ENCODE measurements at regions of chr18 and their contacts with region 1.

Region 1: GRCh38 chr18:58180738-58181353 is 136.8 kb downstream of the NEDD4L start:
- DNase-seq: peak; percentile 69
- H3K4me3 Mint-ChIP-seq: no peak overlapping the region
- H3K27ac Mint-ChIP-seq: no peak overlapping the region
- H3K4me1 Mint-ChIP-seq: peaks cover 15% of the 10 kb centered on the region
- H3K27me3 Mint-ChIP-seq: no peaks in the 10 kb centered on the region
- CTCF ChIP-seq: peak; percentile 79

Region 2: DNA sequence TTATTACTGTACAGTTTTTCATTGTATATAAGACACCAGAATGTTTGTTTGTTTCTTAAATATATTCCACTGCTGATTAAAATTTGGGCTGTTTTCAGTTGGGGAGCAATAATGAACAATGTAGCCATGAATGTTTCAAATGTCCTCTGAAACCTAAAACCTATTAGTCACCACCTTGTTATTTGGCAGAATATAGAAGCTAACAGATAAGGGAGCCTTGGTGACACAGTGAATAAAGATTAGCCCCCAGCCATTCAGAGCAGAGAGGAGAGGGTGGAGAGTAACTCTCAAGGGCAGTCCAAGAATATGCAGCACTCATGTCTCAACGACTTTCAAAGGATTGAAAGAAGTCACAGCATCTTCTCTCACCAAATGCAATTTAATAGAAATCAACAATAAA is 334.6 kb before region 1 on chr18:
- CTCF ChIA-PET with region 1: no interaction called
- POLR2A ChIA-PET with region 1: no interaction called
- intact Hi-C with region 1: no loop called
- DNase-seq: peak; percentile 16
- H3K4me3 Mint-ChIP-seq: no peak overlapping the region
- H3K27ac Mint-ChIP-seq: peak overlapping the region; percentile 57
- H3K4me1 Mint-ChIP-seq: peaks cover 8% of the 10 kb centered on the region
- H3K27me3 Mint-ChIP-seq: no peaks in the 10 kb centered on the region
- CTCF ChIP-seq: no peak

Region 3: GRCh38 chr18:58128381-58129374 is 52.2 kb before region 1 on chr18:
- CTCF ChIA-PET with region 1: interaction called, 4 read pairs
- POLR2A ChIA-PET with region 1: interaction called, 4 read pairs
- intact Hi-C with region 1: loop called (anchors 5 kb)
- DNase-seq: no peak
- H3K4me3 Mint-ChIP-seq: no peak overlapping the region
- H3K27ac Mint-ChIP-seq: no peak overlapping the region
- H3K4me1 Mint-ChIP-seq: no peaks in the 10 kb centered on the region
- H3K27me3 Mint-ChIP-seq: no peaks in the 10 kb centered on the region
- CTCF ChIP-seq: no peak

Region 4: GRCh38 chr18:58195278-58195765 is 14.5 kb after region 1 on chr18:
- CTCF ChIA-PET with region 1: interaction called, 10 read pairs
- POLR2A ChIA-PET with region 1: interaction called, 19 read pairs
- intact Hi-C with region 1: no loop called
- DNase-seq: peak; percentile 38
- H3K4me3 Mint-ChIP-seq: peak overlapping the region; percentile 75
- H3K27ac Mint-ChIP-seq: peak overlapping the region; percentile 32
- H3K4me1 Mint-ChIP-seq: peaks cover 23% of the 10 kb centered on the region
- H3K27me3 Mint-ChIP-seq: no peaks in the 10 kb centered on the region
- CTCF ChIP-seq: no peak

Region 5: DNA sequence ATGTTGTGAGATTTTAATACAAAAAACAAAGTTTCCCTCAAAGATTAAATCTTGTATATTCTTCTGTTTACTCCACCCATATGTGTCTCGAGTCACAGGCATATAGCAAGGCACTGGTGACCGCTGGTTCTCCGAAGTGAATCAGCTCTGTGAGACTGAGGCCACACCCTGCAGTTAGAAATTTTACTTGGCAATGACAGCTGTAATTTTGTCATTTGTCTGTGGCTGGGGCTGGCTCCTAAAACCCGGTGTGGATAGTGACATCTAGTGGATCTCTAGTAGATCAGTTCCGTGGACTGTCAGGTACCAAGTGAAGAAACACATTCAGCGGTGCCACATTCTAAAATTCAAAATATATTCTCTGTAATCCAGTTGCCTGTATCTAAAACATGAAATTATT is 141.1 kb after region 1 on chr18:
- CTCF ChIA-PET with region 1: interaction called, 5 read pairs
- POLR2A ChIA-PET with region 1: interaction called, 3 read pairs
- intact Hi-C with region 1: loop called (anchors 1 kb)
- DNase-seq: peak; percentile 91
- H3K4me3 Mint-ChIP-seq: peak overlapping the region; percentile 50
- H3K27ac Mint-ChIP-seq: peak overlapping the region; percentile 85
- H3K4me1 Mint-ChIP-seq: peaks cover 14% of the 10 kb centered on the region
- H3K27me3 Mint-ChIP-seq: no peaks in the 10 kb centered on the region
- CTCF ChIP-seq: peak; percentile 48

Region 6: DNA sequence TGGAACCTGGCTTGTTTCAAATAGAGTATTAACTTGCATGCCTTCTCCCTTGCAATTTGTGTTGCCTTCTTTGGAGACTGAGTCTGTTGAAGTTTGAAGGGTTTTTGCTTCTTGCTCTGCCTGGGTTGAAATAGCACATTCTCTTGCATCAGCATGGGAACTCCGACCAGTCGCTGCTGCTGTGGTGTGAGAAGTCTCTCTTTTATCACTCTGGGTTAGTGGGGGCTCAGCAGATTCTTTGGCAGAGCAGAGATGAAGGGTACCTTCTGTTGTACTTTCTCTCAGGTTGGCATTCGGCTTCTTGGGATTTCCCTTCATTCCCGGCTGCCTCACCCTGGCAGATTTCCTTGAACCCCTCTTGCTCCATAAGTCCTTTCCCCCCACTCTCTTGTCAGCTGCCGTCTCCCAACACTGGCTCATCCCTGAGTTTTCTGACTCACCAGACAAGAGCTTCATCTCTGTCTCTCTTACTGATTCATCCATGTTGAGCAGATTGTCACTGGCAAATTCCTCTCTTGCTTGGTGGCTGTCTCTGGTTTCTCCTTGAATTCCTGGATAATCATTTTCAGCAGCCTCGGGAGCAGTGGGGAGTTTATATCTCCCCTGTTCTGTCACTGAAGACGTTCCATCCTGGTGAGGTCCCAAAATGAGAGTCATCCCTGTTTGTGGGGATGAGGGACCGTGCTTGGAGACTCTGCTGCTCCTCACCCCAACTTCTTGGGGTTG is 398.2 kb after region 1 on chr18:
- CTCF ChIA-PET with region 1: no interaction called
- POLR2A ChIA-PET with region 1: no interaction called
- intact Hi-C with region 1: no loop called
- DNase-seq: peak; percentile 62
- H3K4me3 Mint-ChIP-seq: no peak overlapping the region
- H3K27ac Mint-ChIP-seq: no peak overlapping the region
- H3K4me1 Mint-ChIP-seq: peaks cover 6% of the 10 kb centered on the region
- H3K27me3 Mint-ChIP-seq: no peaks in the 10 kb centered on the region
- CTCF ChIP-seq: no peak

Measured in MCF 10A (cell line).